Naive thymus-derived CD4-positive, alpha-beta T cell (primary cell): ENCODE measurements at regions of chr9 and their contacts with region 1.

Region 1: DNA sequence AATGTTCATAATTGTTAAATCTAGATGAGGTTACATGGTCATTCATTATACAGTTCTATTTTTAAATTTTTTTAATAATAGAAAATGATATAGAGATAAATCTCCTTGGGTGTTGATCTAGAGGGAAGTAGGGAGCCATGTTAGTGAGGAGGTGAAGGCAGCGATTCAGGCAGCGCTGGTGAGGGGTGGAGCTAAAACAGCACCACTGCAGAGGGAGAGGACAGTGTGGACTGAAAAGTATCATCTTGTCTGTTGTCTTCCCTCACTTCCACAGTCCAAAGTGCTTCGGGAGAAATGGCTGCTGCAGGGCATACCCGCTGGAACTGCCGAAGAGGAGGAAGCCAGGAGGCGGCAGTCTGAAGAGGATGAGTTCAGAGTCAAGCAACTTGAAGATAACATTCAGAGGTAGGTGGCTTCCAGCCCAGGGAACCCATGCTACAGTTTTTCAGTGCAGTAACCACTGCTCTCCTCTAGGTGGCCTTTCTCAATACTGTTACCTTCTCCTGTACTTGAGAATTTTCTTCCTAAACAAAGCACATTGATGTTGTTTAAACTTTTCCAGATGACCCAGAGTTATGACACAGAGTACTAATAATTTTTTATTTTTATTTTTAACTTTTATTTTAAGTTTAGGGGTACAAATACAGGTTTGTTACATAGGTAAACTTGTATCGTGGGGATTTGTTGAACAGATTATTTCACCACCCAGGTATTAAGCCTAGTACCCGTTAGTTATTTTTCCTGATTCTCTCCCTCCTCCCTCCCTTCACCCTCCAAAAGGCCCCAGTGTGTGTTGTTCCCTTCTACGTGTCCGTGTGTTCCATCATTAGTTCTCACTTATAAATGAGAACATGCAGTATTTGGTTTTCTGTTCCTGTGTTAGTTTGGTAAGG is 100.5 kb downstream of the PALM2AKAP2 start:
- DNase-seq: peak in 5 of 9 donors; percentile 2 to 33 (median 25)
- ATAC-seq: peak; percentile 72
- H3K4me3 ChIP-seq: no peak overlapping the region
- H3K4me3 Mint-ChIP-seq: peak overlapping the region in 1 of 10 donors; percentile 62
- H3K27ac ChIP-seq: no peak overlapping the region
- H3K27ac Mint-ChIP-seq: peak overlapping the region in 1 of 9 donors; percentile 31
- H3K4me1 ChIP-seq: no peaks in the 10 kb centered on the region
- H3K4me1 Mint-ChIP-seq: peaks cover 0 to 37% (median 0%) of the 10 kb centered on the region in 7 donors
- H3K27me3 ChIP-seq: no peaks in the 10 kb centered on the region
- H3K27me3 Mint-ChIP-seq: peaks cover 4 to 15% (median 8%) of the 10 kb centered on the region in 5 donors

Region 2: GRCh38 chr9:109012876-109013678 is 867.4 kb before region 1 on chr9 and contains the start of gene CTNNAL1:
- CTCF ChIA-PET with region 1: no interaction called
- POLR2A ChIA-PET with region 1: no interaction called
- intact Hi-C with region 1: loop called in 1 of 2 experiments (anchors 10 kb)
- DNase-seq: peak; percentile 68 to 88 (median 78)
- ATAC-seq: peak; percentile 98
- H3K4me3 ChIP-seq: peak within 1 kb of the TSS; percentile 72
- H3K4me3 Mint-ChIP-seq: peak within 1 kb of the TSS; percentile 93 to 99 (median 97)
- H3K27ac ChIP-seq: peak within 1 kb of the TSS; percentile 77
- H3K27ac Mint-ChIP-seq: peak within 1 kb of the TSS; percentile 79 to 95 (median 92)
- H3K4me1 ChIP-seq: peaks cover 6 to 13% of the 10 kb centered on the region in 2 donors
- H3K4me1 Mint-ChIP-seq: peaks cover 17 to 34% (median 21%) of the 10 kb centered on the region in 7 donors
- H3K27me3 ChIP-seq: no peaks in the 10 kb centered on the region
- H3K27me3 Mint-ChIP-seq: peaks cover 0 to 22% (median 4%) of the 10 kb centered on the region in 5 donors
- total RNA-seq, gene CTNNAL1: 1.1 to 9.9 (median 2.5) TPM

Region 3: GRCh38 chr9:109469646-109470358 is 410.7 kb before region 1 on chr9:
- CTCF ChIA-PET with region 1: no interaction called
- POLR2A ChIA-PET with region 1: no interaction called
- intact Hi-C with region 1: loop called in 1 of 2 experiments (anchors 10 kb)
- DNase-seq: peak in 8 of 9 donors; percentile 11 to 69 (median 24)
- ATAC-seq: peak; percentile 78
- H3K4me3 ChIP-seq: no peak overlapping the region
- H3K4me3 Mint-ChIP-seq: no peak overlapping the region
- H3K27ac ChIP-seq: no peak overlapping the region
- H3K27ac Mint-ChIP-seq: no peak overlapping the region
- H3K4me1 ChIP-seq: no peaks in the 10 kb centered on the region
- H3K4me1 Mint-ChIP-seq: peaks cover 0 to 38% (median 0%) of the 10 kb centered on the region in 7 donors
- H3K27me3 ChIP-seq: no peaks in the 10 kb centered on the region
- H3K27me3 Mint-ChIP-seq: peaks cover 4 to 46% (median 16%) of the 10 kb centered on the region in 5 donors

Region 4: GRCh38 chr9:109859433-109859832 is 21.1 kb before region 1 on chr9:
- CTCF ChIA-PET with region 1: no interaction called
- POLR2A ChIA-PET with region 1: no interaction called
- intact Hi-C with region 1: no loop called
- DNase-seq: no peak
- ATAC-seq: no peak
- H3K4me3 ChIP-seq: no peak overlapping the region
- H3K4me3 Mint-ChIP-seq: no peak overlapping the region
- H3K27ac ChIP-seq: no peak overlapping the region
- H3K27ac Mint-ChIP-seq: no peak overlapping the region
- H3K4me1 ChIP-seq: no peaks in the 10 kb centered on the region
- H3K4me1 Mint-ChIP-seq: no peaks in the 10 kb centered on the region
- H3K27me3 ChIP-seq: no peaks in the 10 kb centered on the region
- H3K27me3 Mint-ChIP-seq: peaks cover 0 to 33% (median 13%) of the 10 kb centered on the region in 5 donors